ENCODE measurements at regions of chr6 and their contacts with region 1.

Region 1: GRCh38 chr6:25302677-25303128 is 23.5 kb downstream of the CARMIL1 start:
- DNase-seq: no peak
- H3K4me3 ChIP-seq: peak overlapping the region; percentile 50
- H3K27ac ChIP-seq: peak overlapping the region; percentile 85
- H3K4me1 ChIP-seq: peaks cover 87% of the 10 kb centered on the region
- CTCF ChIP-seq: no peak

Region 2: DNA sequence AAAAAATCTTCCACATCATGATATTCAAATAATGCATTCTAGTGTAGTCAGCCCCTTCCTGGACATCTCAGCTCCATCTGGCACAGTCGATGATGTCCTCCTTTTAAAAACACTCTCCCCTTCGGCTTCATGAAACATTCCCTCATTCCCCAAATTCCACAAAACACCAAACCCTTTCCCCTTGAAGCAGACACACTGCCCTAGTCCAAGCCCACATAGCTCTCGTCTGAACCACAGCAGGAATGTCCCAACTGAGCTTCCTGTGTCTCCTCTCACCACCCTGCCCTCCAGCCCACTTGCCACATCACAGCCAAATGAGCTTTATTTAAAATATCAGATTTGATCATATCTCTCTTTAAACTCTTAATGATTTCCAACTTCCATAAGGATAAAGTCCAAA is 129.9 kb before region 1 on chr6:
- CTCF ChIA-PET with region 1: no interaction called
- POLR2A ChIA-PET with region 1: no interaction called
- intact Hi-C with region 1: no loop called
- DNase-seq: no peak
- H3K4me3 ChIP-seq: no peak overlapping the region
- H3K27ac ChIP-seq: no peak overlapping the region
- H3K4me1 ChIP-seq: no peaks in the 10 kb centered on the region
- CTCF ChIP-seq: no peak

Region 3: DNA sequence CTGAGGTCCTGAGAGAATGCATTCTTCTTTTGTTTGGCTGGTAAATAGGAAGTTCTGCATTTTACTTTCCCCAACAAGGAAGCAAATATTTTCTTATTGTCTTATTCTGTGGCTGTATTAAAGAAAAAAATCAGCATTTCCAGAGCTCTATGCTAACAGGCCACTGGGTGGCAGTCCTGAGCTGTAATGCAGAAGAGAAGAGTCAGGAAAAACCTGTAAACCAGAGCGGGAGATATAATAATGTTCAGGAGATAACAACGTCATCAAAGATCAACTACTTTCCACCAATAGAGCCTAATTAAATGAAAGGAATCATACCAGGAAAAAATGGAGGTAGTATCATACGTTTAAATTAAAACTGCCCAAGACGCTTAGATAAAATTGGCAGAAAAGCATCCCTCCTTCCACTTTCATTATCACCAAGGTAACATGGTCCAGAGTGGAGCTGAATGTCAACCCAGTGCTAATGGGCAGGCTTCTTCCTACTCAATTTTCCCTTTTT is 79.2 kb before region 1 on chr6:
- CTCF ChIA-PET with region 1: no interaction called
- POLR2A ChIA-PET with region 1: no interaction called
- intact Hi-C with region 1: no loop called
- DNase-seq: peak; percentile 79
- H3K4me3 ChIP-seq: peak overlapping the region; percentile 62
- H3K27ac ChIP-seq: no peak overlapping the region
- H3K4me1 ChIP-seq: peaks cover 27% of the 10 kb centered on the region
- CTCF ChIP-seq: peak; percentile 100

Region 4: DNA sequence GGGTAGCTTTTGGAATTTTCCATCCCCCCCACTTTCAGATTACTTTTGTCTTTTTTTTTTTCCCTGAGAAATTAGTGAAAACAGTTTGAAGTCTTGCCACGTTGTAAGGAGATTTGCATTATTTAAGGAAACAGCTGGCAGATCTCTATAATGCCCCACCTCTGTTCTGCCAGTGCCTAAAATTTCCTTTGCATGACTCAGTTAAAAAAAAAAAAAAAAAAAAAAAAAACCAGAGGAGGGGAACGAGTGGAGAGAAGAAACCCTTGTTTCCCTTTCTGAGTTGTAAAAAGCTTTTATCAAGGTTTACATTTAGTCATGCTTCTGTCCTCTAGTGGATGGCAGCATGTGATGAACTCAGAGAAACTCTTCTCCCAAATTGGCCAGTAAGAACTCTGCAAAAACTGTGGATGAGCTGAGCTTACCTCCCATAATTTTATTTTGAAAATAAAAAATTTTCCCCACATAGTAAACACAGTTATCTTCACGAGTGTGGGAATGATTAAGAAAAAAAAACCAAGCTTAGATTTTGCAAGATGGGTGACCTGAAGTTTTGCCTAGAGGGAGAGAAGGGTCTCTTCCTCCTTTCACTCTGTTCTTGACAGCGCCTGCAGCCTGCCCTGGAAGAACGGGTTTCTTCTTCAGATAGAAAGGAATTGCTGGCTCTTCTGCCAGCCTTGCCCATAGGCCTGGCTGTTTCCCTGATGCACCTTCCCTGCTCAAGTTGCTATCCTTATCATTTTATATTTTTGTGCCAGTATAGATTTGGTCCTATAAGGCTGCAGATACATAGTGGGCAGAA is 10.2 kb after region 1 on chr6:
- CTCF ChIA-PET with region 1: no interaction called
- POLR2A ChIA-PET with region 1: interaction called, 15 read pairs
- intact Hi-C with region 1: no loop called
- DNase-seq: peak; percentile 29
- H3K4me3 ChIP-seq: no peak overlapping the region
- H3K27ac ChIP-seq: no peak overlapping the region
- H3K4me1 ChIP-seq: peaks cover 45% of the 10 kb centered on the region
- CTCF ChIP-seq: no peak; the same call in 1 of the 2 replicates

Region 5: DNA sequence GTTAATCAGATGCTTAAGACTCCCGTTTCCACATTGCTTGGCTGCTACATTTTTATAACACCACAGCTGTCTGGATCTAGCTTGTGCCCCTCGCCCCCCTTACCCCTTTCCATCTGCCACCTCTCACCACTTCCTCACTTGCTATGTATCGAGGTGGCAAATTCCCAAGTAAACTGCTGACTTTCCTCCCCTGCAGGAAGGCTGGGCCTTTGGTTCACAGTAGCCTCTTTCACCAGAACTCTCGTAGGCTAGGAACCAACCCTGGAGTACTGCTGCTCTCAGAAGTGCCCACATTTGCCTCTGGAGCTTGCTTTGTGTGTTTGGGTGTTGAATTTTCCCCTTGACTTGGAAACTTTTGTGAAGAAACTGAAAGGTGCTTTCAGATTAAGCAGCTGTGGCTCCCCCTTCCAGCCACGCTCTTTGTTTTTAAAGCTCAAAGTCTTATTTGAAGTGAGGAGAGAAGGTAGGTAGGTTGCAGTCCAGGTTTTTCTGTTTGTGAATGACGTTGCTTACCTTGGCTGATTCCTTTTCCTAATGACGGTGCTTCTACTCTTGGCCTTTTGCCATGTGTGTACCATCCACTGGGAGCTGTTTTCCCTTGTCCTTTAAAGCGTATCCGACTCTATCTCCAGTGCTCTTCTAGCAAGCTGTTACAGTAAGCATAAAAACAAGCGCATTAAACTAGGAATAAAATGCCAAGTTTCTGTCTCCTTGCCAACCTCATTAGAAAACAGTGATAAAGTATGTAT is 66.9 kb after region 1 on chr6:
- CTCF ChIA-PET with region 1: no interaction called
- POLR2A ChIA-PET with region 1: interaction called, 3 read pairs
- intact Hi-C with region 1: loop called (anchors 2 kb)
- DNase-seq: peak; percentile 59
- H3K4me3 ChIP-seq: peak overlapping the region; percentile 65
- H3K27ac ChIP-seq: peak overlapping the region; percentile 87
- H3K4me1 ChIP-seq: peaks cover 90% of the 10 kb centered on the region
- CTCF ChIP-seq: 0 out of 2 replicates have a peak, but pooled peaks have one; percentile 16